Activated CD8-positive, alpha-beta T cell treated with anti-CD3 and anti-CD28 coated beads, Interleukin-2, amount 10 ng/mL, durations not matched to agents 7 days and 5 days (primary cell): ENCODE measurements at regions of chr19 and their contacts with region 1.

Region 1: DNA sequence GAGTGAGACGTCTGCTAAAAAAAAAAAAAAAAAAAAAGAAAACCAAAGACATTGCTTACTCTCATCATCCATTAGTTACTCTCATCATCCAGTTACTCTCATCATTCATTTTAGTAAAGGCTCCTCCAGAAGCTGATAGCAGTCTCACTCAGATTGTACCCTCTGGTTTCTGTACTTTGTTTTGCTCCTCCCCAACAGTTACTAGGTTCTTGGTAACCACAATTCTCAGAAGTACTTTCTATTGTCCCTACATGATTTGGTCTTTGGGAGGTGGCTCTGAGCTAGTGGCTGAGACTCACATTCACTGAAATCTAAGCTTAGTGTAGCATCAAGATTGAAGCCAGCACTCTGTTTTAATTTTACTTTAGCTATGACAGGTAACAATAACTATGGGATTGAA is 14.3 kb downstream of the ERICH4 start:
- DNase-seq: peak; percentile 46
- ATAC-seq: peak; percentile 93
- H3K4me3 Mint-ChIP-seq: peak overlapping the region; percentile 34
- H3K27ac Mint-ChIP-seq: peak overlapping the region; percentile 81
- H3K4me1 Mint-ChIP-seq: peaks cover 33% of the 10 kb centered on the region
- H3K27me3 Mint-ChIP-seq: peaks cover 26% of the 10 kb centered on the region

Region 2: GRCh38 chr19:41439441-41440222 is 17.6 kb before region 1 on chr19 and contains the start of gene DMAC2:
- CTCF ChIA-PET with region 1: interaction called, 11 read pairs
- POLR2A ChIA-PET with region 1: interaction called, 5 read pairs
- DNase-seq: peak; percentile 99
- ATAC-seq: peak; percentile 96
- H3K4me3 Mint-ChIP-seq: no peak within 1 kb of the TSS
- H3K27ac Mint-ChIP-seq: no peak within 1 kb of the TSS
- H3K4me1 Mint-ChIP-seq: peaks cover 25% of the 10 kb centered on the region
- H3K27me3 Mint-ChIP-seq: peaks cover 8% of the 10 kb centered on the region
- total RNA-seq, gene DMAC2: 44.8 to 47.0 TPM

Region 3: GRCh38 chr19:41597600-41598041 is 140.4 kb after region 1 on chr19:
- CTCF ChIA-PET with region 1: interaction called, 61 read pairs
- POLR2A ChIA-PET with region 1: no interaction called
- DNase-seq: peak; percentile 84
- ATAC-seq: peak; percentile 84
- H3K4me3 Mint-ChIP-seq: no peak overlapping the region
- H3K27ac Mint-ChIP-seq: no peak overlapping the region
- H3K4me1 Mint-ChIP-seq: peaks cover 7% of the 10 kb centered on the region
- H3K27me3 Mint-ChIP-seq: peaks cover 27% of the 10 kb centered on the region